AG04450 (cell line): ENCODE measurements at regions of chr21 and their contacts with region 1.

Region 1: GRCh38 chr21:33127154-33127893 is 57.4 kb downstream of the OLIG1 start:
- DNase-seq: peak; percentile 30
- H3K4me3 ChIP-seq: peak overlapping the region; percentile 51
- H3K27ac ChIP-seq: no peak overlapping the region
- H3K27me3 ChIP-seq: peaks cover 42% of the 10 kb centered on the region
- CTCF ChIP-seq: peak; percentile 91

Region 2: DNA sequence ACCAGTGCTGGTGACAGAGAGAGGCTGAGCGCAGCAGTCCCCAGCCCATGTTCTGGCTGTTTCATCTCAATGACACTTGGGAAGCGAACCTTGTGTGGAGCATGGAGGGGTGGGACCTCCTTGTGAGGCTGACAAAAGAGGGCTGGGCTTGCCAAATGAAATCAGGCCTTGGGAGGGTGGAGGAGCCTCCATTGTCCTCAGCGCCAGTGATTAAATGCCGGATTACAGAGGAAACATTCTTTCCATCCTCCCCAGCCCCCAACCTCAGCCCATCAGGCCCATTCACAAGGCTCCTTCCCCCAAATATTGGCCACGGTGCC is 292.4 kb before region 1 on chr21:
- CTCF ChIA-PET with region 1: interaction called, 17 read pairs
- POLR2A ChIA-PET with region 1: no interaction called
- DNase-seq: no peak
- H3K4me3 ChIP-seq: no peak overlapping the region
- H3K27ac ChIP-seq: no peak overlapping the region
- H3K27me3 ChIP-seq: peaks cover 16% of the 10 kb centered on the region
- CTCF ChIP-seq: no peak

Region 3: GRCh38 chr21:32940079-32941014 is 187.0 kb before region 1 on chr21:
- CTCF ChIA-PET with region 1: interaction called, 35 read pairs
- POLR2A ChIA-PET with region 1: no interaction called
- DNase-seq: peak; percentile 3
- H3K4me3 ChIP-seq: no peak overlapping the region
- H3K27ac ChIP-seq: no peak overlapping the region
- H3K27me3 ChIP-seq: peaks cover 2% of the 10 kb centered on the region
- CTCF ChIP-seq: peak; percentile 84

Region 4: GRCh38 chr21:32994305-32994704 is 133.0 kb before region 1 on chr21:
- CTCF ChIA-PET with region 1: interaction called, 70 read pairs
- POLR2A ChIA-PET with region 1: interaction called, 3 read pairs
- DNase-seq: no peak
- H3K4me3 ChIP-seq: no peak overlapping the region
- H3K27ac ChIP-seq: no peak overlapping the region
- H3K27me3 ChIP-seq: peaks cover 12% of the 10 kb centered on the region
- CTCF ChIP-seq: peak; percentile 65